ENCODE measurements at regions of chr2 and their contacts with region 1.

Region 1: GRCh38 chr2:136384531-136385303 is 266.8 kb upstream of the CXCR4 start:
- DNase-seq: no peak
- ATAC-seq: peak; percentile 77 to 87
- H3K4me3 ChIP-seq: no peak overlapping the region
- H3K27ac ChIP-seq: no peak overlapping the region
- H3K4me1 ChIP-seq: no peaks in the 10 kb centered on the region
- H3K27me3 ChIP-seq: no peaks in the 10 kb centered on the region
- CTCF ChIP-seq: peak; percentile 52

Region 2: DNA sequence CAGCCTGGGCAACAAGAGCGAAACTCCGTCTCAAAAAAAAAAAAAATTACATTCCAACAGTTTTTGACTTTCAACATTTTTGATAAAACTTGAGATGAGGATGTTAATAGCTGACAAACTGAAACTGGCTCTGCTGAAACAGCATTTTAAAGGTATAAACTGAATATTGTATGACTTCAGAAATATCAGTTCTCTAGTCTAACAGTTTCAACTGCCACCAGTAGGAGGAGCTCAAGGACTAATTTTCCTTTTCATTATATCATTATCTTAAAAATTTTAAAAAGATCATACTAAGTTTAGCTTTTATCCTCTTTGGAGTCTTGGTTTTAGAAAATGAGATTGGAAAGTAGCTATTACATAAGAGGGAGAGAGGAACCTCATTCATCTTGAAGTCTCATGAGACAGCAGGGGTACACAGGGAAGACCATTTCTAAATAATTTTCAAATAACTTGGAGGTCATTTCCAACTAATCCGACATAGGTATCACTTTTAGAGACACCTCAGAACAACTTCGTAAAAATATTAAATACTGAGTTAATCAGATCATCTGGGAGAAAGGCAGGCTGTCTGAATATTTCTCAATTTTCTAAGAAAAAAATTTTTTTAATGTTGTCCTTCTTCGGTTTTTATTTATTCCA is 470.9 kb before region 1 on chr2:
- intact Hi-C with region 1: loop called (anchors 10 kb)
- DNase-seq: no peak
- ATAC-seq: peak in 1 of 2 donors; percentile 53
- H3K4me3 ChIP-seq: no peak overlapping the region
- H3K27ac ChIP-seq: no peak overlapping the region
- H3K4me1 ChIP-seq: no peaks in the 10 kb centered on the region
- H3K27me3 ChIP-seq: no peaks in the 10 kb centered on the region
- CTCF ChIP-seq: peak; percentile 78

Measured in lower lobe of right lung (tissue), 2 donors.